ENCODE measurements at regions of chr5 and their contacts with region 1.

Region 1: DNA sequence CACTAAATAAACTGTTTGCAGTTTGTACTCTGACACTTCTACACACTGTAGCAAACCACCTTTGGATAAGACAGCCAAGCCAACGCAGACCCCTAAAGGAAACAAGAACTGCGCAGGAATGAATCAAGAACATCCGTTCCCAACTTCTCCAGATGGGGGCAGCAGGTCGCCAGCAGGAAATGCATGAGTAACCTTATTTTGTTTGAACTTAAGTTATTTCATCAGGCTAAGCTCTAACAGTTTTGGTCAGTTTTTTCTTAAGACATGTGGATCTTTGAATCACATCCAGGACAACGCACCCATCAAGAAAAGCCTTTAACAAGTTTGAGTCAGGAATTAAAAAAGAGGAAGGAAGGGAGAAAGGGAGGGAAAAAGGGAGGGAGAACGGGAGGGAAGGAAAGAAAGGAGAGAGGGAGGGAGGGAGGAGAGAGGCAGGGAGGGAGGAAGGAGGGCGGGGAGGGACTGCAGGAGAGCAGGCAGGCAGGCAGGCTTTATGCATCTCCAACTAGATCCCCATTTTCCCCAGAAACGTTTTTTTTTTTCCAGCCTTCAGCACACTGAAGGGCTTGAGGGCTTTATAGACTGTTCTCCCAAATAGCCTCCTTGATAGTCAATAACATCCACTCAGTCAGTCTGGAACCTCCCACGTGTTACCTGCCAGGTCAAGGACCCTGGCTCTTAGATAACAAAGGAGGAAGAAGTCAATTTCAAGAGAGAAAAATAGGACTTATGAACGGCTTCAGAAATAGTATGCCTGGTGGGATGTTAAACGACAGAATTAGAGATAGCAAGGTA is 22.2 kb downstream of the BHMT start:
- DNase-seq: peak; percentile 80
- ATAC-seq: peak; percentile 80
- H3K4me3 Mint-ChIP-seq: peak overlapping the region; percentile 33
- H3K27ac Mint-ChIP-seq: peak overlapping the region; percentile 80
- H3K4me1 Mint-ChIP-seq: peaks cover 13% of the 10 kb centered on the region
- H3K27me3 Mint-ChIP-seq: peaks cover 3% of the 10 kb centered on the region

Region 2: DNA sequence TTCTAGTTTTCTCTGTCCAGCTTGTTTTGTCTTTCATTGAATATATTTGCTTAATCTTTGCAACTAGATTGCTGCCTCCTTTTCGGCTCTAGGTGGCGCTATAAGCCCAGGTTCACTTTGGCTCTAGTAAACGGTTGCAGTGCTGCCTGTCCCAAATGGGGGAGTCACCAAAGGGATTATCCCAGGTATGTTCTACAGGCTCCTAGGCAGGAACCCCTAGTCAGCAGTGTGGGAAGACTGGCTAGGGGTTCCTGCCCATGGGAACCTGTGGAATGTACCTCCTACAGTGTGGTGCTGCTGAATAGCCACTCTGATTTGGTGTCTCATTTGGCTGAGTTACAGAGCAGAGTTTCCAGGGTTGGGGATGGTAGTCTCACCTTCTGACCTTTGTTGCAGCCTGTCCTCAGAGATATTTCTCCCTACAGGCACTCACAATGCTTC is 233.9 kb before region 1 on chr5:
- CTCF ChIA-PET with region 1: interaction called, 15 read pairs
- DNase-seq: peak; percentile 55
- ATAC-seq: no peak
- H3K4me3 Mint-ChIP-seq: no peak overlapping the region
- H3K27ac Mint-ChIP-seq: no peak overlapping the region
- H3K4me1 Mint-ChIP-seq: no peaks in the 10 kb centered on the region
- H3K27me3 Mint-ChIP-seq: no peaks in the 10 kb centered on the region

Region 3: DNA sequence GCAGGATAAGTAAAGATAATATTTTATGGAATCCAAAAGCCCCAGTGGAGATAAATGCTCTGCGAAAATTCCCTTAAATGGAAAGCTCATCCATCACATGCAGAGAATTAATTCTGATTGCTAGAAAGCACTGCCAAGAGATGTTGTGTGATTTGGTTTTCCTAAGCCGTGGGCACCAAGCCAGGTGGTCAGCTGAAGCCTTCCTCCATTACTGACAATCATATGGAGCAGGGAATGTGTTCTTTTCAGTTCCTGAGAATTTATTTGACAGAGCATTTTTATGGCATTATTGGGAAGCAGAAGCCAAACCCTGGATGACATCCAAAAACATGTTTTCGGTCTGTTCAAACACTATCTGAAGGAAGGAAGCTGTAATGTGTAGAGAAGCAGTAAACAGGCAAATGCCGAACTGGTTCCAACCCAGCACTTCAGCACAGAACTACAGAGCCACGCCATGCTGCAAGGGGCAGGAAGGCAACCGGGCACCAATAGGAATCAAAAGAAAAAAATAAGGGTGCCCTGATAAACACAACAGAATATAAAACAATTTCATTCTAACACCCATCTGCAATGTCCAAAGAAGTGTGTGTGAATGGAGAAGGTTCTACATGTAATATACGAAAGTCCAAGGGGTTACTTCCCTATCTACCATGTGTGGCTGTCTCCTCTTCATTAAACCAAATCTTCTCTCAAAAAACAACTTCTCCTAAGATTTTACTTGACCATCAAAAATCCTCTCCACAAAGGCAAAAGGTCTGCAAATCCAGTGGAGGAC is 161.0 kb before region 1 on chr5:
- CTCF ChIA-PET with region 1: no interaction called
- DNase-seq: no peak
- ATAC-seq: no peak
- H3K4me3 Mint-ChIP-seq: no peak overlapping the region
- H3K27ac Mint-ChIP-seq: no peak overlapping the region
- H3K4me1 Mint-ChIP-seq: no peaks in the 10 kb centered on the region
- H3K27me3 Mint-ChIP-seq: no peaks in the 10 kb centered on the region

Region 4: GRCh38 chr5:79020861-79021561 is 112.8 kb before region 1 on chr5:
- CTCF ChIA-PET with region 1: interaction called, 251 read pairs
- DNase-seq: peak; percentile 65
- ATAC-seq: peak; percentile 68
- H3K4me3 Mint-ChIP-seq: no peak overlapping the region
- H3K27ac Mint-ChIP-seq: peak overlapping the region; percentile 29
- H3K4me1 Mint-ChIP-seq: peaks cover 11% of the 10 kb centered on the region
- H3K27me3 Mint-ChIP-seq: peaks cover 88% of the 10 kb centered on the region

Region 5: DNA sequence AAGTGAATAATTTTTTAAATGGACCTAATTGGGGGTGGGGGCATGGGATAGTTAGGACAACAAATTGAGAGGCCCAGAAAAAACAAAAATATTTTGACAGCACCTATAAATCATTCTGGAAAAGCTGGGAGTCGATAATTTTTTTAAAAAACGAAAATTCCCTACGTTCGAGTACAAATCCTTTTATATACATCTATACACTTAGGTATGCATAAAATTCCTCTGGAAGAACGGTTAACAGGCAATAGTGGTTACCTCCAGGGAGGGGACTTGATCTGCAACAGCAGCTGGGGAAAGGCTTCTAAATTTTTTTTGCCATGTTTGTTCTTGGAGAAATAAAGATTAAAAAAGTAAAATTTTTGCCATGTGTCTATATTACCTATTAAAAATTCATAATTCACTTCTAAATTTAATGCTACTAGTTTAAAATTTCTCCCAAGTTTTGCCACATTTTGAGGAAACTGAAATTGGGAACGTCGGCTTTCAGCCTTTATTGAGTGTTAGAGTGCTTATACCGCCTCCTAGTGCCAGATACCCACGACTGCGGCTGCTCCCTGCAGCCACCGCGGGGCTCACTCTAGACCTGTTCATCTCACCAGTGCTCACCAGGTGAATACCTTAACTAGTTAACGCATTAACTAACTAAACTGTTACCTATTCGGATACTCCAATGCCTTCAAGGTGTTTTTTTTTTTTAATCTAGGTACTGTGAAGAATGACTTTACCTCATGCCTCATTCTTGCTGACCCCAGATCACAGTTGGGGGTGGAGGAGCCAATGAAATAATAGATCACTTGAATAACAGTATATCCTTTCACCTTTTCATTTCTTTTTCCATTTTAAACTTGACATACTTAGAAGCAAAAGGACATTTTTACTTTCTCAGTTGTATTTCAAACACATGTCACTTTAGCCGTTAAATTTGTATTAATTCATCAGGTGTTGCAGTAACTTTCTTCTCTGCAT is 24.0 kb before region 1 on chr5:
- CTCF ChIA-PET with region 1: interaction called, 14 read pairs
- DNase-seq: peak; percentile 50
- ATAC-seq: no peak
- H3K4me3 Mint-ChIP-seq: no peak overlapping the region
- H3K27ac Mint-ChIP-seq: no peak overlapping the region
- H3K4me1 Mint-ChIP-seq: peaks cover 6% of the 10 kb centered on the region
- H3K27me3 Mint-ChIP-seq: peaks cover 89% of the 10 kb centered on the region

Region 6: GRCh38 chr5:79172269-79172668 is 38.4 kb after region 1 on chr5:
- CTCF ChIA-PET with region 1: no interaction called
- DNase-seq: no peak
- ATAC-seq: no peak
- H3K4me3 Mint-ChIP-seq: no peak overlapping the region
- H3K27ac Mint-ChIP-seq: no peak overlapping the region
- H3K4me1 Mint-ChIP-seq: no peaks in the 10 kb centered on the region
- H3K27me3 Mint-ChIP-seq: no peaks in the 10 kb centered on the region

Region 7: DNA sequence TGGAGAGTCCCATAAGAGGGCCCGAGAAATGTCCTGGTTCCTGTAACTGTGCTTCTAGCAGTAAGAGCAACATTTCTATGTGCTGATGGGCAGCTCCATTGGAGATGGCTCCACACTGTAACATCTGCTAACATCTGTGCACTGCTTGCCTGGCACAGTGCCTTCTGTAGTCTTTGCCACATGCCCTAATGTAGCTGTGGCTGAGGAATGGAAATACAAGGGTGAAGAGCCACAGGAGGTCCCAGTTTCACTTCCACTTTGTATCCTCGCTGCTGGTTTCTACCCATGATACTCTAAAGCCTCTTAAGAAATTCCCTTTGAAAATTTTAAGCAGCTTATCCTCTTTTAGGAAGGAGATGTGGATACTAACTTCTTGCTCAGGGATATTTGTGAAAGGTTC is 282.6 kb after region 1 on chr5:
- CTCF ChIA-PET with region 1: no interaction called
- DNase-seq: peak; percentile 42
- ATAC-seq: peak; percentile 80
- H3K4me3 Mint-ChIP-seq: peak overlapping the region; percentile 14
- H3K27ac Mint-ChIP-seq: peak overlapping the region; percentile 27
- H3K4me1 Mint-ChIP-seq: peaks cover 9% of the 10 kb centered on the region
- H3K27me3 Mint-ChIP-seq: no peaks in the 10 kb centered on the region

Region 8: DNA sequence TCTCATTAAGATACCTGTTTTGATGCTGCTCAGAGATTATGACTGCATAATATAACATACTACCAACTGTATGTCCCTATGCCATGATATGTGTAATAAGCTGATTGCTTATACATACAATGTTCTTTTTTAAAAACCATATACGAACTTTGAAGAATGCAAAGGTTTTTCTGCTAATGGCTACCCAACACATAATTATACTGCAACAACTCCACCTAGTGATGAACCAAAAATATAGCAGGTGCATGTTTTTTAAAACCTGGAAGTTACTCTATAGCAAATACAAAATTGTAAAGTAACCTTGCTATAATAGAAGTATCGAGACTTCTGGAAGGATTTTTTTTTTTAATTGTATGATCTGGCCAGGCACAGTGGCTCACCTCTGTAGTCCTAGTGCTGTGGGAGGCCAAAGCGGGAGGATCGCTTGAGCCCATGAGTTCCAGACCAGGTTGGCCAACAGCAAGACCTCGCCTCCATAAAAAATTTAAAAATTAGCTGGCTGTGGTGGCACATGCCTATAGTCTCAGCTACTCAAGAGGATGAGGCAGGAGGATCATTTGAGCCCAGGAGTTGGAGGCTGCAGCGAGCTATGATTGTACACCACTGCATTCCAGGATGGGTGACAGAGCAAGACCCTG is 331.0 kb after region 1 on chr5:
- CTCF ChIA-PET with region 1: interaction called, 71 read pairs
- DNase-seq: no peak
- ATAC-seq: no peak
- H3K4me3 Mint-ChIP-seq: no peak overlapping the region
- H3K27ac Mint-ChIP-seq: no peak overlapping the region
- H3K4me1 Mint-ChIP-seq: no peaks in the 10 kb centered on the region
- H3K27me3 Mint-ChIP-seq: peaks cover 4% of the 10 kb centered on the region

Measured in activated CD8-positive, alpha-beta memory T cell treated with anti-CD3 and anti-CD28 coated beads, Interleukin-2, amount 10 ng/mL, durations not matched to agents 7 days and 5 days (primary cell).